ENCODE measurements at regions of chrX and their contacts with region 1.

Region 1: DNA sequence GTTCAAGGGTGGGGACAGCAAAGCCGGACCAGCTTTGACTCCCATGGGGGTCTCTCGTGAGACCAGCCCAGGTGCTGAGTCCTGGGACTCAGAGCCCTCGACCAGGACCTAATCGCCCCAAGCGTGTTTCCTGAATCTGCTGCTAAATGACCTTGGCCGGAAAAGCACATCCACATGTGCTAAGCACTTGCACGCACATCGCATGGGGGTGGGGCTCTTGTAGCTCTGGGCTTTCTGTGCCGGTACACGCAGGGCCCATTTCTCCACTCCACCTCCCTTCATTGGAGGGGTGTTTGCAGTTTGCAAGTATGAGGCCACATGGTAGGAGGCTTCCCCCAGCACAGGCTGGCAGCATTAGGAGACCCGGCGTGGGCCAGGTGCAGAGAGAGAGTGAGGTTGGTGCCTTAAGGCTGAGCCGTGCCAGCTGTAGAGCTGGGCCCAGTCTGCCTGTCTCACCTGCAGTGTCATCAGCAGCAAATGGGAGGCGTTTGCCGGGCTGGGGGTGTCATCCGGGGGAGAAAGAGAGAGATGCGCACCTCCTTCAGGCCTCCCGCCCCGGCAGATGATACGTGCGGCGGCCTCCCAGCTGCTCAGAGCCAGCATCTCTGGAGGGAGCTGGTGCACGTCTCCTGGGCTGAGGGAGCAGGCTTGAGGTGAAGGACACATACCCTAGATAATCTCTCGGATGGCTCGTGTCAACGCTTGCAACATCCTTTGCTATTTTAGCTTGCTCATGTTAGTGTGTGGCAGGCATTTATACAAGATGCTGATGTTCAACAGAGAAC is 45.2 kb upstream of the CLCN4 start:
- DNase-seq: peak; percentile 79
- ATAC-seq: peak; percentile 71
- H3K4me3 Mint-ChIP-seq: peak overlapping the region; percentile 82
- H3K27ac Mint-ChIP-seq: peak overlapping the region; percentile 100
- H3K4me1 Mint-ChIP-seq: peaks cover 68% of the 10 kb centered on the region
- H3K27me3 Mint-ChIP-seq: no peaks in the 10 kb centered on the region

Region 2: GRCh38 chrX:9995855-9996339 is 115.7 kb before region 1 on chrX:
- CTCF ChIA-PET with region 1: interaction called, 70 read pairs
- POLR2A ChIA-PET with region 1: interaction called, 6 read pairs
- DNase-seq: peak; percentile 77
- ATAC-seq: peak; percentile 82
- H3K4me3 Mint-ChIP-seq: no peak overlapping the region
- H3K27ac Mint-ChIP-seq: no peak overlapping the region
- H3K4me1 Mint-ChIP-seq: no peaks in the 10 kb centered on the region
- H3K27me3 Mint-ChIP-seq: no peaks in the 10 kb centered on the region

Region 3: DNA sequence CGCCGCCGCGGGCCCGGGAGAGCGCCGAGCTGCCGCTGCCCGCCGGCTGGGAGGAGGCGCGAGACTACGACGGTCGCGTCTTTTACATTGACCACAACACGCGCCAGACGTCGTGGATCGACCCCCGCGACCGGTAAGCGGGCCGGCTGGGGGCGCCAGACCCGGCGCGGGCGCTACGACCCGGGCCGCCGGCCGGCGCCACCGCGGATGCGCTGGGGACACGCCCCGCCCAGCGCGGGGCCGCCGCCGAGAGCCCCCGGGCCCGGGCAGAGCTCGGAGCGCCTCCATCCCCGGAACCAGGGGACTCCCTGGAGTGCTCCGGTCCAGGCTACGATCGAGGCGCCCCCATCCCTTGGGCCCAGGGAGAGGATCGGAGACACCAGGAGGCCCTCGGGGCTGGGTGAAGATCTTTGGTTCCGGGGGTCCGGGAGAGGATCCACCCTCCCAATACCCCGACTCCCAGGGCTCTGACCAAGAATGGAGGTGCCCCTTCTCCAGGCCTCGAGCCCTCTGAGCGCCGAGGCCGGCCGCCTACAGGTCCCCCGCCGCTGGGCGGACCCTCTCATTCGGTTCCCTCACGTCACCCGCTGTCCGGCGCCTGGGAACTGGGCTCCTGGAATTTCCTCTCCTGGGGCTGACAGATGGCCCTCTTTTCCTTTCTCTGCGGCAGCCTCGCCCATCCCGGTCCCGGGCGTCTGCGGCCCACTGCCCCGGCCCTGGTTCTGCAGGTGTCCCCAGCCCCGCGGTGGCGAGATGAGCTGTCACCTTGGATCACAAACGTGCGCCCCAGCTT is 95.6 kb before region 1 on chrX:
- CTCF ChIA-PET with region 1: interaction called, 4 read pairs
- POLR2A ChIA-PET with region 1: interaction called, 16 read pairs
- DNase-seq: no peak
- ATAC-seq: peak; percentile 20
- H3K4me3 Mint-ChIP-seq: peak overlapping the region; percentile 51
- H3K27ac Mint-ChIP-seq: peak overlapping the region; percentile 20
- H3K4me1 Mint-ChIP-seq: peaks cover 34% of the 10 kb centered on the region
- H3K27me3 Mint-ChIP-seq: peaks cover 5% of the 10 kb centered on the region

Region 4: GRCh38 chrX:10083809-10084208 is 27.7 kb before region 1 on chrX:
- CTCF ChIA-PET with region 1: interaction called, 15 read pairs
- POLR2A ChIA-PET with region 1: interaction called, 22 read pairs
- DNase-seq: no peak
- ATAC-seq: no peak
- H3K4me3 Mint-ChIP-seq: no peak overlapping the region
- H3K27ac Mint-ChIP-seq: peak overlapping the region; percentile 46
- H3K4me1 Mint-ChIP-seq: peaks cover 41% of the 10 kb centered on the region
- H3K27me3 Mint-ChIP-seq: no peaks in the 10 kb centered on the region

Region 5: GRCh38 chrX:10098270-10098713 is 13.3 kb before region 1 on chrX:
- CTCF ChIA-PET with region 1: interaction called, 46 read pairs
- POLR2A ChIA-PET with region 1: interaction called, 48 read pairs
- DNase-seq: peak; percentile 75
- ATAC-seq: peak; percentile 77
- H3K4me3 Mint-ChIP-seq: peak overlapping the region; percentile 83
- H3K27ac Mint-ChIP-seq: peak overlapping the region; percentile 93
- H3K4me1 Mint-ChIP-seq: peaks cover 49% of the 10 kb centered on the region
- H3K27me3 Mint-ChIP-seq: no peaks in the 10 kb centered on the region

Region 6: DNA sequence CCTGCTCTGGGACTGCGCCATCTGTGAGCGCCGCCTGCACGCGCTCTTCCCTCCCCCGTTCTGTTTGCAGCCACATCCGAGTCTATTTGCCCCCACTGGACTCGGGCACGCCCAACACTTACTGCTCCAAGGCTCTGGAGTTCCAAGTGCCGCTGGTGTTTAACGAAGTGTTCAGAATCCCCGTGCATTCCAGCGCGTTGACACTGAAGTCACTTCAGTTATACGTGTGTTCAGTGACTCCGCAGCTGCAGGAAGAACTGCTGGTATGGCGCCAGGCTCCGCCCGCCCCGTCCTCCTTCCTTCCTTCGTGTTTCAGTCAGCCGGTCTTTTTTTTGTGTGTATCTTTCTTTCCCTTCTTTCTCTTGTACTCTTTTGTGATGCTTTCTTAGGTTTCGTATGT is 14.5 kb after region 1 on chrX:
- CTCF ChIA-PET with region 1: no interaction called
- POLR2A ChIA-PET with region 1: no interaction called
- DNase-seq: no peak
- ATAC-seq: no peak
- H3K4me3 Mint-ChIP-seq: no peak overlapping the region
- H3K27ac Mint-ChIP-seq: no peak overlapping the region
- H3K4me1 Mint-ChIP-seq: peaks cover 13% of the 10 kb centered on the region
- H3K27me3 Mint-ChIP-seq: no peaks in the 10 kb centered on the region

Region 7: GRCh38 chrX:10833299-10834169 is 722.0 kb after region 1 on chrX:
- CTCF ChIA-PET with region 1: no interaction called
- POLR2A ChIA-PET with region 1: no interaction called
- DNase-seq: no peak
- ATAC-seq: no peak
- H3K4me3 Mint-ChIP-seq: no peak overlapping the region
- H3K27ac Mint-ChIP-seq: no peak overlapping the region
- H3K4me1 Mint-ChIP-seq: no peaks in the 10 kb centered on the region
- H3K27me3 Mint-ChIP-seq: no peaks in the 10 kb centered on the region

Measured in activated CD8-positive, alpha-beta T cell treated with anti-CD3 and anti-CD28 coated beads, Interleukin-2, amount 10 ng/mL, durations not matched to agents 7 days and 5 days (primary cell).